Activated naive CD4-positive, alpha-beta T cell treated with anti-CD3 and anti-CD28 coated beads for 36 hours (primary cell): ENCODE measurements at regions of chr2 and their contacts with region 1.

Region 1: GRCh38 chr2:121722479-121722878 is 14.2 kb downstream of the NIFK start:
- DNase-seq: peak; percentile 59
- H3K4me3 Mint-ChIP-seq: no peak overlapping the region
- H3K27ac Mint-ChIP-seq: peak overlapping the region; percentile 91
- H3K4me1 Mint-ChIP-seq: peaks cover 41% of the 10 kb centered on the region
- H3K27me3 Mint-ChIP-seq: no peaks in the 10 kb centered on the region

Region 2: GRCh38 chr2:121085801-121086200 is 636.7 kb before region 1 on chr2:
- CTCF ChIA-PET with region 1: no interaction called
- intact Hi-C with region 1: loop called (anchors 2 kb)
- DNase-seq: no peak
- H3K4me3 Mint-ChIP-seq: no peak overlapping the region
- H3K27ac Mint-ChIP-seq: no peak overlapping the region
- H3K4me1 Mint-ChIP-seq: no peaks in the 10 kb centered on the region
- H3K27me3 Mint-ChIP-seq: peaks cover 5% of the 10 kb centered on the region

Region 3: GRCh38 chr2:121095257-121096080 is 627.0 kb before region 1 on chr2:
- CTCF ChIA-PET with region 1: no interaction called
- intact Hi-C with region 1: loop called (anchors 2 kb)
- DNase-seq: peak; percentile 53
- H3K4me3 Mint-ChIP-seq: no peak overlapping the region
- H3K27ac Mint-ChIP-seq: no peak overlapping the region
- H3K4me1 Mint-ChIP-seq: no peaks in the 10 kb centered on the region
- H3K27me3 Mint-ChIP-seq: peaks cover 5% of the 10 kb centered on the region

Region 4: GRCh38 chr2:121400201-121400600 is 322.3 kb before region 1 on chr2:
- CTCF ChIA-PET with region 1: interaction called, 7 read pairs
- intact Hi-C with region 1: loop called (anchors 1 kb)
- DNase-seq: no peak
- H3K4me3 Mint-ChIP-seq: no peak overlapping the region
- H3K27ac Mint-ChIP-seq: no peak overlapping the region
- H3K4me1 Mint-ChIP-seq: no peaks in the 10 kb centered on the region
- H3K27me3 Mint-ChIP-seq: no peaks in the 10 kb centered on the region

Region 5: GRCh38 chr2:121513597-121514333 is 208.7 kb before region 1 on chr2:
- CTCF ChIA-PET with region 1: no interaction called
- intact Hi-C with region 1: no loop called
- DNase-seq: no peak
- H3K4me3 Mint-ChIP-seq: no peak overlapping the region
- H3K27ac Mint-ChIP-seq: no peak overlapping the region
- H3K4me1 Mint-ChIP-seq: peaks cover 7% of the 10 kb centered on the region
- H3K27me3 Mint-ChIP-seq: no peaks in the 10 kb centered on the region

Region 6: GRCh38 chr2:121596221-121597080 is 126.0 kb before region 1 on chr2:
- CTCF ChIA-PET with region 1: interaction called, 6 read pairs
- intact Hi-C with region 1: loop called (anchors 1 kb)
- DNase-seq: peak; percentile 61
- H3K4me3 Mint-ChIP-seq: peak overlapping the region; percentile 82
- H3K27ac Mint-ChIP-seq: peak overlapping the region; percentile 87
- H3K4me1 Mint-ChIP-seq: peaks cover 49% of the 10 kb centered on the region
- H3K27me3 Mint-ChIP-seq: no peaks in the 10 kb centered on the region

Region 7: GRCh38 chr2:121699421-121700333 is 22.8 kb before region 1 on chr2:
- CTCF ChIA-PET with region 1: interaction called, 4 read pairs
- intact Hi-C with region 1: loop called (anchors 1 kb)
- DNase-seq: peak; percentile 96
- H3K4me3 Mint-ChIP-seq: peak overlapping the region; percentile 76
- H3K27ac Mint-ChIP-seq: peak overlapping the region; percentile 93
- H3K4me1 Mint-ChIP-seq: peaks cover 37% of the 10 kb centered on the region
- H3K27me3 Mint-ChIP-seq: no peaks in the 10 kb centered on the region

Region 8: GRCh38 chr2:121736462-121737341 is 14.2 kb after region 1 on chr2 and contains the start of gene NIFK:
- CTCF ChIA-PET with region 1: no interaction called
- intact Hi-C with region 1: loop called (anchors 1 kb)
- DNase-seq: peak; percentile 100
- H3K4me3 Mint-ChIP-seq: peak within 1 kb of the TSS; percentile 90
- H3K27ac Mint-ChIP-seq: peak within 1 kb of the TSS; percentile 93
- H3K4me1 Mint-ChIP-seq: peaks cover 41% of the 10 kb centered on the region
- H3K27me3 Mint-ChIP-seq: no peaks in the 10 kb centered on the region
- total RNA-seq, gene NIFK: 112 to 117 TPM